WTC11 (cell line): ENCODE measurements at regions of chr2 and their contacts with region 1.

Region 1: DNA sequence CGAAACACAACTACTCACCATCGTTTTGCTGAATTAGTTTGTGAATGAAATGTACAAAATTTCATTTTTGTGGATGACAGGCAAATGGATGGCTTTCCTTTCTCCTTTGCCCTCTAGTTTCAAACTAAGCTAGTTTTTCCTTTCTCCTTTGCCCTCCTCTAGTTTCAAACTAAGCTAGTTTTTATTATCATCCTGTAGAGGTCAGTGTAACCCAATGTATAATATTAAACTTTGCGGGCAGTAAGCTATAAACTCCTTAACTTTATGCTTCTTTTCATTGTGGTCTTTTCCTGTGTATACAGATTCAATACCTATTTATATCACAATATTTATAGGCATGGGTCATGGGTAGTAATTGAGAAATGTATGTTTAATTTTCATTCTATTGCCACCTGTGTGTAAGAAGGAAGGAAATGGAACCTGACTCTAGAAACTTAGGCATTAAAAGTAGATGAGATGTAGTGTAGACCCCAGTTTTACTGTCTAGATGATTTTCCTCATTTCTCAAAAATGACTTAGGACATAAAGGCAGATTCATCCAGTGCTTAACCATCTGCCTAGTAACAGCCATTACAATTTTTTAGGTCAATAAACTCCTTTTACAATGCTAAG is 58.1 kb downstream of the MAP3K19 start:
- DNase-seq: no peak
- ATAC-seq: peak; percentile 61
- H3K4me3 Mint-ChIP-seq: no peak overlapping the region
- H3K27ac Mint-ChIP-seq: no peak overlapping the region
- H3K4me1 Mint-ChIP-seq: no peaks in the 10 kb centered on the region
- H3K27me3 Mint-ChIP-seq: peaks cover 4% of the 10 kb centered on the region
- CTCF ChIP-seq: no peak

Region 2: GRCh38 chr2:134482131-134482723 is 506.9 kb before region 1 on chr2:
- CTCF ChIA-PET with region 1: no interaction called
- POLR2A ChIA-PET with region 1: no interaction called
- DNase-seq: no peak
- ATAC-seq: no peak
- H3K4me3 Mint-ChIP-seq: no peak overlapping the region
- H3K27ac Mint-ChIP-seq: no peak overlapping the region
- H3K4me1 Mint-ChIP-seq: no peaks in the 10 kb centered on the region
- H3K27me3 Mint-ChIP-seq: no peaks in the 10 kb centered on the region; the same call in 1 of the 2 replicates
- CTCF ChIP-seq: no peak

Region 3: DNA sequence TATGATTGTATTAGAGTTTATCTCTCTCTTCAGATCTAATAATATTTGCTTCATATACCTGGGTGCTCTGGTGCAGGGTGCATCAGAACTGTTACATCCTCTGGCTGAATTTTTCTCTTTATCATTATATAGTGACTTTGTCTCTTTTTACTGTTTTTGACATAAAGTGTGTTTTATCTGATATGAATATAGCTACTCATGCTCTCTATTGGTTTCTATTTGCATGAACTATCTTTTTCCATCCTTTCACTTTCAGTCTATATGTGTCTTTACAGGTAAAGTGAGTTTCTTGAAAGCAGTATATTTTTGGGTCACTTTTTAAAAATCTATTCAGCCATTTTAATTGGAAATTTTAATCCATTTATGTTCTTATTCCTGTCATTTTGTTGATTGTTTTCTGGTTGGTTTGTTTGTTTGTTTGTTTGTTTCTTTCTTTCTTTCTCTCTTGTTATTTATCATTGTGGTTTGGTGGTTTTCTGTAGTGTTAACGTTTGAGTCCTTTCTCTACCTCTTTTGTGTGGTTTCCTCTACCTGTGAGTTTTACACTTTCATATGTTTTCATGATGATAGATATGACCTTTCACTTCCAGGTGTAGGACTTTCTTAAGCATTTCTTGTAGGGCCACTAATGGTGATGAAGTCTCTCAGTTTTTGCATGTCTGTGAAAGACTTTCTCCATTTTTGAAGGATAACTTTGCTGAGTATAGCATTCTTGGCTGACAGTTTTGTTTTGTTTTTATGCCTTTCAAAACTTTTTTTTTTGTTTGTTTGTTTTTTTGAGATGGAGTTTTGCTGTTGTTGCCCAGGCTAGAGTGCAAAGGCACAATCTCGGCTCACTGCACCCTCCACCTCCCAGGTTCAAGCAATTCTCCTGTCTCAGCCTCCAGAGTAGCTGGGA is 15.6 kb before region 1 on chr2:
- CTCF ChIA-PET with region 1: interaction called, 10 read pairs
- POLR2A ChIA-PET with region 1: no interaction called
- DNase-seq: no peak
- ATAC-seq: no peak
- H3K4me3 Mint-ChIP-seq: no peak overlapping the region
- H3K27ac Mint-ChIP-seq: no peak overlapping the region
- H3K4me1 Mint-ChIP-seq: no peaks in the 10 kb centered on the region
- H3K27me3 Mint-ChIP-seq: peaks cover 4% of the 10 kb centered on the region
- CTCF ChIP-seq: no peak

Region 4: GRCh38 chr2:135004005-135004746 is 15.1 kb after region 1 on chr2:
- CTCF ChIA-PET with region 1: interaction called, 30 read pairs
- POLR2A ChIA-PET with region 1: no interaction called
- DNase-seq: peak; percentile 81
- ATAC-seq: peak; percentile 95
- H3K4me3 Mint-ChIP-seq: no peak overlapping the region
- H3K27ac Mint-ChIP-seq: no peak overlapping the region
- H3K4me1 Mint-ChIP-seq: peaks cover 12% of the 10 kb centered on the region
- H3K27me3 Mint-ChIP-seq: peaks cover 8% of the 10 kb centered on the region
- CTCF ChIP-seq: peak; percentile 75; the same call in 1 of the 2 replicates

Region 5: DNA sequence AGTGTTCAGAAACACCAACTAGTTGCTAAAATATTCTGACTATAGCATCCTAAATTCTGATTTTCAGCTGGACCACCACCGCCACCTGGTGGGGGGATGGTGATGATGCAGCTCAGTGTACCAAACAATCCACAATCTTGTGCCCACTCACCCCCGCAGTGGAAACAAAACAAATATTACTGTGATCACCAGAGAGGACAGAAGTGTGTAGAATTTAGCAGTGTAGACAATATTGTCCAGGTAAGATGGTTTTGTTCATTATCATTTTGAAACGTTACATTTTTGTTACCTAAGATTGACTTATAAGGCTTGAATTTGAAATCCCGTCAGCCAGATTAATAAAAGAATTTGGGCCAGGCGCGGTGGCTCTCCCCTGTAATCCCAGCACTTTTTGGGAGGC is 720.9 kb after region 1 on chr2:
- CTCF ChIA-PET with region 1: interaction called, 21 read pairs
- POLR2A ChIA-PET with region 1: no interaction called
- DNase-seq: peak; percentile 62
- ATAC-seq: peak; percentile 58; the same call in 1 of the 2 replicates
- H3K4me3 Mint-ChIP-seq: no peak overlapping the region
- H3K27ac Mint-ChIP-seq: no peak overlapping the region; the same call in 1 of the 2 replicates
- H3K4me1 Mint-ChIP-seq: no peaks in the 10 kb centered on the region
- H3K27me3 Mint-ChIP-seq: no peaks in the 10 kb centered on the region
- CTCF ChIP-seq: peak; percentile 92

Region 6: GRCh38 chr2:135797497-135798274 is 808.6 kb after region 1 on chr2:
- CTCF ChIA-PET with region 1: interaction called, 26 read pairs
- POLR2A ChIA-PET with region 1: no interaction called
- DNase-seq: peak; percentile 84
- ATAC-seq: peak; percentile 87
- H3K4me3 Mint-ChIP-seq: no peak overlapping the region
- H3K27ac Mint-ChIP-seq: no peak overlapping the region; the same call in 1 of the 2 replicates
- H3K4me1 Mint-ChIP-seq: peaks cover 7% of the 10 kb centered on the region; the same call in 1 of the 2 replicates
- H3K27me3 Mint-ChIP-seq: no peaks in the 10 kb centered on the region
- CTCF ChIP-seq: peak; percentile 83